CD8-positive, alpha-beta T cell (primary cell): ENCODE measurements at regions of chr6 and their contacts with region 1.

Region 1: GRCh38 chr6:135675862-135676261 is 175.6 kb upstream of the PDE7B start:
- DNase-seq: peak in 7 of 9 experiments; percentile 4 to 75 (median 38)
- ATAC-seq: peak; percentile 75
- H3K4me3 ChIP-seq: no peak overlapping the region
- H3K4me3 Mint-ChIP-seq: no peak overlapping the region
- H3K27ac ChIP-seq: no peak overlapping the region
- H3K27ac Mint-ChIP-seq: no peak overlapping the region
- H3K4me1 ChIP-seq: no peaks in the 10 kb centered on the region
- H3K4me1 Mint-ChIP-seq: no peaks in the 10 kb centered on the region
- H3K27me3 ChIP-seq: no peaks in the 10 kb centered on the region
- H3K27me3 Mint-ChIP-seq: no peaks in the 10 kb centered on the region
- CTCF ChIP-seq: peak; percentile 72

Region 2: DNA sequence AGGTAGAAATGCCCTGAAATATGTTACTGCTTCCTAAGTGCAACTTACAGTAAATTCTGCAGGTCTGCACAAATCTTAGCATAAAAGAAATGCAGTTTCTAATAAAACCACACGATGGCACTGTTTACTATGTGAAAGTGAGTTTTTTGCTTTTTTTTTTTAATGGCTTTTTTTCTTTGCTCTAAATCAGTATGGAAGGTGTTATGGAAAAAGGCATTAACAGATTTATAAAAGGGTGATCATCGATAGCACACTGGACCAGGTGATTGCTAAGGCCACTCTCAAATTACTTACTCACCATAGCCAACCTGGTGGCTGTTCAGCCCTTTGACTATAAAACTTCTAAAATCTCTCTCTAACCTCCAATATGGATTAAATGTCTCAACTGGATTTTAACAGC is 224.2 kb before region 1 on chr6:
- CTCF ChIA-PET with region 1: interaction called, 3 read pairs
- POLR2A ChIA-PET with region 1: no interaction called
- intact Hi-C with region 1: loop called (anchors 5 kb)
- DNase-seq: peak in 2 of 9 experiments; percentile 55 to 63
- ATAC-seq: peak; percentile 52
- H3K4me3 ChIP-seq: no peak overlapping the region
- H3K4me3 Mint-ChIP-seq: no peak overlapping the region
- H3K27ac ChIP-seq: no peak overlapping the region
- H3K27ac Mint-ChIP-seq: no peak overlapping the region
- H3K4me1 ChIP-seq: no peaks in the 10 kb centered on the region
- H3K4me1 Mint-ChIP-seq: no peaks in the 10 kb centered on the region
- H3K27me3 ChIP-seq: no peaks in the 10 kb centered on the region
- H3K27me3 Mint-ChIP-seq: no peaks in the 10 kb centered on the region
- CTCF ChIP-seq: peak; percentile 94

Region 3: GRCh38 chr6:135535989-135536414 is 139.9 kb before region 1 on chr6:
- CTCF ChIA-PET with region 1: interaction called, 7 read pairs
- POLR2A ChIA-PET with region 1: no interaction called
- intact Hi-C with region 1: loop called in 1 of 2 experiments (anchors 5 kb)
- DNase-seq: peak in 2 of 9 experiments; percentile 52 to 62
- ATAC-seq: peak; percentile 46
- H3K4me3 ChIP-seq: no peak overlapping the region
- H3K4me3 Mint-ChIP-seq: peak overlapping the region; percentile 67
- H3K27ac ChIP-seq: no peak overlapping the region
- H3K27ac Mint-ChIP-seq: no peak overlapping the region
- H3K4me1 ChIP-seq: no peaks in the 10 kb centered on the region
- H3K4me1 Mint-ChIP-seq: peaks cover 10% of the 10 kb centered on the region
- H3K27me3 ChIP-seq: no peaks in the 10 kb centered on the region
- H3K27me3 Mint-ChIP-seq: peaks cover 2% of the 10 kb centered on the region
- CTCF ChIP-seq: peak; percentile 76

Region 4: GRCh38 chr6:135938576-135939207 is 262.8 kb after region 1 on chr6:
- CTCF ChIA-PET with region 1: no interaction called
- POLR2A ChIA-PET with region 1: no interaction called
- intact Hi-C with region 1: loop called in 1 of 2 experiments (anchors 1 kb)
- DNase-seq: peak in 1 of 9 experiments; percentile 3
- ATAC-seq: no peak
- H3K4me3 ChIP-seq: no peak overlapping the region
- H3K4me3 Mint-ChIP-seq: no peak overlapping the region
- H3K27ac ChIP-seq: no peak overlapping the region
- H3K27ac Mint-ChIP-seq: no peak overlapping the region
- H3K4me1 ChIP-seq: no peaks in the 10 kb centered on the region
- H3K4me1 Mint-ChIP-seq: no peaks in the 10 kb centered on the region
- H3K27me3 ChIP-seq: no peaks in the 10 kb centered on the region
- H3K27me3 Mint-ChIP-seq: no peaks in the 10 kb centered on the region
- CTCF ChIP-seq: no peak

Region 5: DNA sequence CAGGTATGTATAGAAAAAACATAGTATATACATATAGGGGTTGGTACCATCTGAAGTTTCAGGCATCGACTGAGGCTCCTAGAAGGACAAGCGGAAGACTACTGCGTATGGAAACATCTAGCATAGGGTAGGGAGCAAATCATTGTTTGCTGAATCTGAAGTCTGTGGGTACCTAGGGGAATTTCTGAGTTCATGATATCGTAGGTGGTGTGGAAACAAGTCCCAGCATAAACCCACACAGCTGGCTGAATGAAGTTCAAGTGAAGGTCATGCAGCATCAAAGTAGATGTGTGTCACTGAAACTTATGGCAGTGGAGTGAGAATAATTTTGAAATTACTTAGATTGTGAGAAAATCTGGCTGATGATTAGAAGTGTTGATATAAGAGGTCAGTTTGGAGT is 834.9 kb after region 1 on chr6:
- CTCF ChIA-PET with region 1: no interaction called
- POLR2A ChIA-PET with region 1: no interaction called
- intact Hi-C with region 1: no loop called
- DNase-seq: peak in 1 of 9 experiments; percentile 25
- ATAC-seq: peak; percentile 49
- H3K4me3 ChIP-seq: no peak overlapping the region
- H3K4me3 Mint-ChIP-seq: no peak overlapping the region
- H3K27ac ChIP-seq: no peak overlapping the region
- H3K27ac Mint-ChIP-seq: no peak overlapping the region
- H3K4me1 ChIP-seq: no peaks in the 10 kb centered on the region
- H3K4me1 Mint-ChIP-seq: peaks cover 11% of the 10 kb centered on the region
- H3K27me3 ChIP-seq: no peaks in the 10 kb centered on the region
- H3K27me3 Mint-ChIP-seq: no peaks in the 10 kb centered on the region
- CTCF ChIP-seq: no peak